ENCODE measurements at regions of chr12 and their contacts with region 1.

Region 1: DNA sequence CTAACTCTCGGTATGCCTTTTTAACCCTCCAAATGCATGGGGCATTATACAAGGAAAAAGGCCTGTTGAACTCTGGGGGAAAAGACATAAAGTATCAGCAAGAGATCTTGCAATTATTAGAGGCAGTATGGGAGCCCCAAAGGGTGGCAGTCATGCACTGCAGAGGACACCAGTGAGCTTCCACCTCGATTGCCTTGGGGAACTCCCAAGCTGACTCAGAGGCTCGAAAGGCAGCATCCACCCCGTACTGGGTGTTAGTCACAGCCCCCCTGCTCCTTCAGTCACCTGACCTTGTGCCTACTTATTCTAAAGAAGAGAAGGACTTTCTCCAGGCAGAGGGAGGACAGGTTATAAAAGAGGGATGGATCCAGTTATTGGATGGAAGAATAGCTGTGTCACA is 781.4 kb upstream of the TMEM132C start:
- DNase-seq: peak; percentile 71
- ATAC-seq: peak; percentile 84
- H3K4me3 Mint-ChIP-seq: no peak overlapping the region
- H3K27ac Mint-ChIP-seq: no peak overlapping the region
- H3K4me1 Mint-ChIP-seq: no peaks in the 10 kb centered on the region
- H3K27me3 Mint-ChIP-seq: no peaks in the 10 kb centered on the region

Region 2: DNA sequence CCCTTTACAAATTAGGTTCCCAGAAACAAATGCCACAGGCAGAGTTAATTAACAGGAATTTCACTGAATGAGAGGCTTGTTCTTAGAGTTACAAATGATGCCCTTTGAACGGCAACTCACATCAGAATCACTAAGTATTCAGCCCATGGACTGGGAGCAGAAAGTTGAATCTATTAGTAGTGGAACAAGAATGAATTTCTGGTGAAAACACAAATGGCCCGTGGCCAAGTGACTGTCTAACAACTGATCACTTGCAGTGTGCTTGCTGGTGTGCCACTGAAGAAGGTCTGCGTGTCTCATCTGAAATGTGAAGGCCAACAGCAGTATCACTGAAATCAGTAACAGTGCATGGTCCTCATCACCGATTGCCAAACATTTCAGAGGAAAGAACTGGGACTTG is 112.0 kb before region 1 on chr12:
- CTCF ChIA-PET with region 1: no interaction called
- POLR2A ChIA-PET with region 1: no interaction called
- intact Hi-C with region 1: no loop called
- DNase-seq: no peak
- ATAC-seq: no peak
- H3K4me3 Mint-ChIP-seq: no peak overlapping the region
- H3K27ac Mint-ChIP-seq: no peak overlapping the region
- H3K4me1 Mint-ChIP-seq: no peaks in the 10 kb centered on the region
- H3K27me3 Mint-ChIP-seq: peaks cover 12% of the 10 kb centered on the region

Region 3: DNA sequence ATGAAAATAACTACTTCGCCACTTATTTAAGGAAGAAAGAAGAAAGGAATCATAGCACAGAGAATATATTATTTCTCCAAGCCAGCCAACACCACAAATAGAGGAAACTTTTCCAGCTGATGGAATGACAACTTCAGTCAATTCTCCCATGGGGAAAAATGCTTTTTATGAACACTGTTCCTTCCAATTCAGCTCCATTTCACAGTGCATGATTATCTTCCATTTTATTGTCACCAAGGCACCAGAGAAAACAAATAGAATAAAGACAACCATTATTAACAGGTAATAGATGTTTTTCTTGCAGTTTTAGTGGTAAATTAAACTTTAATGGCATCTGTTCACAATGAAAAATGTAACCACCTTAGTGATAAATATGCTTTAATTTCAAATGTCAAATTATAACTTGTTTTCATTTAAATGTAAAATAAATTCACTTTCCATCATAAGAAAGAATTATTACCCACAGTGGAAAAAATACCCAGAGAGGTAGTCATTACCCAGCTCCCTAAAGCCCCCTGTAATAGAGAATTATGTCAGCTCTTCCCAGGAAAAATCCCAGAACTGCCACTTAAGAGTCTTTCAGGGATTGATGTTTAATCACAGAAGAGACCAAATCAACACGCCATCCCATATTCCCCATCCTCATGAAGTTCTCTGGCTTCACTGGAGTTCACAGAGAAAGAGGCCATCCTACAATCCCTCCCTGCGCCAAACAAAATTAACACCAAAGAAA is 46.9 kb before region 1 on chr12:
- CTCF ChIA-PET with region 1: no interaction called
- POLR2A ChIA-PET with region 1: no interaction called
- intact Hi-C with region 1: no loop called
- DNase-seq: no peak
- ATAC-seq: no peak
- H3K4me3 Mint-ChIP-seq: no peak overlapping the region
- H3K27ac Mint-ChIP-seq: no peak overlapping the region
- H3K4me1 Mint-ChIP-seq: no peaks in the 10 kb centered on the region
- H3K27me3 Mint-ChIP-seq: no peaks in the 10 kb centered on the region

Region 4: DNA sequence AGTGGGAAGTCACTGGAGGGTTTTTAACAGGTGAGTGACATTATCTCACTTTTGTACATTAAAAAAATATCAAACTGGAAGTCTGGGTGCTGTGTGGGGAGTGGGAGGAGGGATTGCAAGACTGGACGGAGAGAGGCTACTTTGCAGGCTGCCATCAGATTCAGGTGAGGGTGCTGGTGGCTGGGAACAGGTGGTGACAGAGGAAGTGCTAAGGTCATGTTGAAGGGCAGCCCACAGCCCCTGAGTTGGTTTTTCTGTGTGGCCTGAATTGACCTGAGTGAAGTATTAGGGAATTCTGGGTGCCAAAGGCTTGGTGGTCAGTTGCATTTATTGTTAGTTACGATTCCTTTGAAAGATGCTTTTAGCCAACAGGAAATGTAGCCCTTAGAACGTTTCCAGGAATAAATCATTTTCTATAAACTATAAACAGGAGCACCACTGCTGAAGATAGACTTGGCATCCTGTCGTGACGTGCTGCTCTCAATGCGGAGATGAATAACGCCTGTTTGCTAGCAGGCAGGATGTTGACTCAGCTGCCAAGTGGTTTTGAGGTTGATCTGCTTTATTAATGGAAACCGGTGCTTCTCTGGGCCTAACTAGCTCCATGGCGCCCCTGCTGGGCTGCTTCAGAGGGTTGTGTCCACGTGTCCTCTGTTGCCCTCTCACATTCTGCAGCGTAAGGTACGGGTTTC is 74.0 kb after region 1 on chr12:
- CTCF ChIA-PET with region 1: interaction called, 3 read pairs
- POLR2A ChIA-PET with region 1: no interaction called
- intact Hi-C with region 1: loop called in 1 of 2 experiments (anchors 5 kb)
- DNase-seq: peak; percentile 91
- ATAC-seq: peak; percentile 95
- H3K4me3 Mint-ChIP-seq: no peak overlapping the region
- H3K27ac Mint-ChIP-seq: peak overlapping the region; percentile 85
- H3K4me1 Mint-ChIP-seq: peaks cover 21% of the 10 kb centered on the region
- H3K27me3 Mint-ChIP-seq: no peaks in the 10 kb centered on the region

Region 5: GRCh38 chr12:127677537-127678131 is 192.1 kb after region 1 on chr12:
- CTCF ChIA-PET with region 1: interaction called, 6 read pairs
- POLR2A ChIA-PET with region 1: no interaction called
- intact Hi-C with region 1: loop called in 1 of 2 experiments (anchors 1 kb)
- DNase-seq: peak; percentile 74
- ATAC-seq: no peak
- H3K4me3 Mint-ChIP-seq: no peak overlapping the region
- H3K27ac Mint-ChIP-seq: no peak overlapping the region
- H3K4me1 Mint-ChIP-seq: no peaks in the 10 kb centered on the region
- H3K27me3 Mint-ChIP-seq: no peaks in the 10 kb centered on the region

Region 6: GRCh38 chr12:128069359-128069997 is 584.0 kb after region 1 on chr12:
- CTCF ChIA-PET with region 1: no interaction called
- POLR2A ChIA-PET with region 1: no interaction called
- intact Hi-C with region 1: loop called in 1 of 2 experiments (anchors 1 kb)
- DNase-seq: peak; percentile 49
- ATAC-seq: no peak
- H3K4me3 Mint-ChIP-seq: no peak overlapping the region
- H3K27ac Mint-ChIP-seq: no peak overlapping the region
- H3K4me1 Mint-ChIP-seq: no peaks in the 10 kb centered on the region
- H3K27me3 Mint-ChIP-seq: no peaks in the 10 kb centered on the region

Measured in activated CD4-positive, alpha-beta T cell treated with anti-CD3 and anti-CD28 coated beads for 36 hours (primary cell).